Calu3 (cell line): ENCODE measurements at regions of chr10 and their contacts with region 1.

Region 1: GRCh38 chr10:110414563-110415309 is 83.0 kb upstream of the DUSP5 start:
- DNase-seq: peak; percentile 84
- H3K4me3 Mint-ChIP-seq: peak overlapping the region; percentile 36
- H3K27ac Mint-ChIP-seq: peak overlapping the region; percentile 96
- H3K4me1 Mint-ChIP-seq: peaks cover 67% of the 10 kb centered on the region
- H3K27me3 Mint-ChIP-seq: no peaks in the 10 kb centered on the region
- CTCF ChIP-seq: no peak

Region 2: GRCh38 chr10:110311357-110311949 is 103.3 kb before region 1 on chr10:
- CTCF ChIA-PET with region 1: interaction called, 3 read pairs
- intact Hi-C with region 1: loop called (anchors 5 kb)
- DNase-seq: peak; percentile 33
- H3K4me3 Mint-ChIP-seq: no peak overlapping the region
- H3K27ac Mint-ChIP-seq: no peak overlapping the region
- H3K4me1 Mint-ChIP-seq: no peaks in the 10 kb centered on the region
- H3K27me3 Mint-ChIP-seq: no peaks in the 10 kb centered on the region
- CTCF ChIP-seq: no peak

Region 3: GRCh38 chr10:110326351-110327032 is 88.2 kb before region 1 on chr10:
- CTCF ChIA-PET with region 1: interaction called, 4 read pairs
- intact Hi-C with region 1: loop called (anchors 5 kb)
- DNase-seq: no peak
- H3K4me3 Mint-ChIP-seq: peak overlapping the region; percentile 50
- H3K27ac Mint-ChIP-seq: peak overlapping the region; percentile 92
- H3K4me1 Mint-ChIP-seq: peaks cover 41% of the 10 kb centered on the region
- H3K27me3 Mint-ChIP-seq: no peaks in the 10 kb centered on the region
- CTCF ChIP-seq: no peak

Region 4: DNA sequence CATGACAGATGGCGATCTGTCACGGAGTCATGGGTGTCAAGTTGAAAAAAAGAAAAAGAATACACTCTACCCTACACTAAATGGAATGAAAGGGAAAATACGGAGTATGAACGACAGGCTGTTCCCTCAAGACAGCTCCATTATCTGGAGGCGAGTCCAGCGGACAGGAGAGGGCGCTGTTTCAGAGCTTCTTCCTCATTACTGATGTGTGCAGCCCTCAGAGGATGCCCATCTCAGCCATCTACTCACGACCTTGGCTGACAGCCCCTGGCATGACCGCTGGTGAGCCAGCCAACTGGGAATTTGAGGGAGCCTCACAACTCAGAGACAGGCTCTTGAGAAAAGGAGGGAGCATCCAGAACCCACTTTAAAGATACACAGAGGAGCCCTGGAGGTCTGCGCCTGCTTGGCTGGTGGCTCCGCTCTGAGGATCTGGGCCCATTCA is 60.4 kb before region 1 on chr10:
- CTCF ChIA-PET with region 1: interaction called, 10 read pairs
- intact Hi-C with region 1: loop called (anchors 5 kb)
- DNase-seq: peak; percentile 72
- H3K4me3 Mint-ChIP-seq: no peak overlapping the region
- H3K27ac Mint-ChIP-seq: no peak overlapping the region
- H3K4me1 Mint-ChIP-seq: peaks cover 33% of the 10 kb centered on the region
- H3K27me3 Mint-ChIP-seq: no peaks in the 10 kb centered on the region
- CTCF ChIP-seq: peak; percentile 33